Panc1 (cell line): ENCODE measurements at regions of chr5 and their contacts with region 1.

Region 1: DNA sequence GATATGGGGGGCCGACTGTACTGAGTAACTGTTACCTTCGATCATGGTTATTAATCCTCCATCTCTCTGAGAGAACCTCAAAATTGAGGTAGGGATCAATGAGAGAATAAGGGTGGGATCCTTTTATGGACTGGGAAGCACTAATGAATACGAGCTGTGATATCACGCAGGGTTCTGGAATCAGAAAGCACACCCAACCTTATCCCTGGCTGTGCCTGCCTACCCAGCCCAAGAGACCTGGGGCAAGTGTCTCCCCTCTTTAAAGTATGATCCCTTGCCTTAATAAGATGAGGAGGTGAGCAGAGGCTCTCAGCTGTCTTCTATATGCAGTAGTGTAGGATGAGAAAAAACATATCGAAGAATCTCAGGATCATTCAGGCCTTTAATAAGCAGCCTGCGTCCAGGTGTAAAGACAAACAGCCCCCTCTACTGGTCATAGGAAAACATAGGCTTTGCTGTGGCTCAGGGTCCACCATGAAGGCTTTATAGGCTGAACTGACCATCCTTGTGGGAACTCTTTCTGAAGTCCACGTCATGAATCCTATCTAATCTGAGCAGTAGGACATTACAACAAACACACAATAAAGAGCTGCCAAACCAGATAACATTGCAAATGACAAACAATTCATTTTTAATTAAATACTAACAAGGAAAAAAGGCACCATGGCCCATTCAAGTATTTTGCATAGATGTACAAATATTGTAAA is 16.8 kb downstream of the NIPAL4 start:
- DNase-seq: no peak
- ATAC-seq: peak; percentile 88
- H3K4me3 ChIP-seq: no peak overlapping the region
- H3K27ac ChIP-seq: no peak overlapping the region
- H3K4me1 ChIP-seq: no peaks in the 10 kb centered on the region
- H3K27me3 ChIP-seq: no peaks in the 10 kb centered on the region
- CTCF ChIP-seq: peak; percentile 87

Region 2: GRCh38 chr5:157328277-157328912 is 148.5 kb before region 1 on chr5:
- CTCF ChIA-PET with region 1: interaction called, 4 read pairs
- POLR2A ChIA-PET with region 1: no interaction called
- in situ Hi-C with region 1: no loop called
- intact Hi-C with region 1: loop called (anchors 1 kb)
- DNase-seq: peak; percentile 62
- ATAC-seq: peak; percentile 98
- H3K4me3 ChIP-seq: peak overlapping the region; percentile 14 to 62; a peak in 3 of 4 replicates
- H3K27ac ChIP-seq: no peak overlapping the region
- H3K4me1 ChIP-seq: peaks cover 4% of the 10 kb centered on the region; the same call in 1 of the 2 replicates
- H3K27me3 ChIP-seq: no peaks in the 10 kb centered on the region; the same call in 1 of the 2 replicates
- CTCF ChIP-seq: peak; percentile 95

Region 3: DNA sequence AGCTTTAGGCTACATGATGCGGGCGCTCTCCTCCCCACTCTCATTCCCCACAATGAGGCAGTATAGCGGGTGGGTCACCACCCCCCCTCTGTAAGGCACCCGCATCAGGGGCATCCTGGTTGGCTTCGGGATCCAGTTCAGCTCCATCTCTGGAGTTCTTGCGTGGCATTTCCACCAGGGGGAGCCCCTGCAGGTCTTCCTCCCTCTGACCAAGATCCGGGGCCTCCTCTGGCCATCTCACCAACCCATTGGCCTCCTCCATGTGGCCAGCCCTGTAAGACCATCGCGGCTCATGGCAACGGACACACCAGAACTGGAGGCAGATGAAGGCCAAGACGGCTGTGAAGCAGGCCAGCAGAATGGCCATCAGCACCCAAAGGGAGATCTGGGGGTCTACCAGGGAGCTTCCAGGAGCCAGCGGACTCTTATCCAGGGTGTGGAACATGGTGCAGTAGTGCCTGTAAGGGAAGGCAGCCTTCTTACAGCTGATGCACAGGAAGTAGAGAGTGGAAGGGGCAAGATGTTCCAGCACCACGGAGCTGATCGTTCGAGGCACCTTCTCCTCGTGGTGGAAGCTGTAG is 133.9 kb before region 1 on chr5:
- CTCF ChIA-PET with region 1: interaction called, 4 read pairs
- POLR2A ChIA-PET with region 1: no interaction called
- in situ Hi-C with region 1: no loop called
- intact Hi-C with region 1: loop called (anchors 5 kb)
- DNase-seq: no peak
- ATAC-seq: 0 out of 2 replicates have a peak, but pooled peaks have one; percentile 62
- H3K4me3 ChIP-seq: no peak overlapping the region
- H3K27ac ChIP-seq: no peak overlapping the region
- H3K4me1 ChIP-seq: no peaks in the 10 kb centered on the region
- H3K27me3 ChIP-seq: peaks cover 3% of the 10 kb centered on the region
- CTCF ChIP-seq: peak; percentile 72

Region 4: GRCh38 chr5:157443041-157443549 is 33.8 kb before region 1 on chr5:
- CTCF ChIA-PET with region 1: no interaction called
- POLR2A ChIA-PET with region 1: interaction called, 10 read pairs
- in situ Hi-C with region 1: no loop called
- intact Hi-C with region 1: no loop called
- DNase-seq: no peak
- ATAC-seq: no peak
- H3K4me3 ChIP-seq: no peak overlapping the region
- H3K27ac ChIP-seq: no peak overlapping the region
- H3K4me1 ChIP-seq: no peaks in the 10 kb centered on the region
- H3K27me3 ChIP-seq: no peaks in the 10 kb centered on the region
- CTCF ChIP-seq: no peak